Natural killer cell (primary cell): ENCODE measurements at regions of chr7 and their contacts with region 1.

Region 1: GRCh38 chr7:149422129-149422913 is 38.5 kb downstream of the ZNF777 start:
- DNase-seq: peak; percentile 72 to 92
- ATAC-seq: peak; percentile 98 to 99 (median 98)
- H3K4me3 ChIP-seq: peak overlapping the region; percentile 58
- H3K4me3 Mint-ChIP-seq: peak overlapping the region; percentile 80
- H3K27ac ChIP-seq: peak overlapping the region; percentile 70
- H3K27ac Mint-ChIP-seq: peak overlapping the region; percentile 69 to 75
- H3K4me1 ChIP-seq: peaks cover 15% of the 10 kb centered on the region
- H3K4me1 Mint-ChIP-seq: peaks cover 0 to 12% of the 10 kb centered on the region in 2 donors
- H3K27me3 ChIP-seq: no peaks in the 10 kb centered on the region
- H3K27me3 Mint-ChIP-seq: no peaks in the 10 kb centered on the region
- CTCF ChIP-seq: peak; percentile 53

Region 2: DNA sequence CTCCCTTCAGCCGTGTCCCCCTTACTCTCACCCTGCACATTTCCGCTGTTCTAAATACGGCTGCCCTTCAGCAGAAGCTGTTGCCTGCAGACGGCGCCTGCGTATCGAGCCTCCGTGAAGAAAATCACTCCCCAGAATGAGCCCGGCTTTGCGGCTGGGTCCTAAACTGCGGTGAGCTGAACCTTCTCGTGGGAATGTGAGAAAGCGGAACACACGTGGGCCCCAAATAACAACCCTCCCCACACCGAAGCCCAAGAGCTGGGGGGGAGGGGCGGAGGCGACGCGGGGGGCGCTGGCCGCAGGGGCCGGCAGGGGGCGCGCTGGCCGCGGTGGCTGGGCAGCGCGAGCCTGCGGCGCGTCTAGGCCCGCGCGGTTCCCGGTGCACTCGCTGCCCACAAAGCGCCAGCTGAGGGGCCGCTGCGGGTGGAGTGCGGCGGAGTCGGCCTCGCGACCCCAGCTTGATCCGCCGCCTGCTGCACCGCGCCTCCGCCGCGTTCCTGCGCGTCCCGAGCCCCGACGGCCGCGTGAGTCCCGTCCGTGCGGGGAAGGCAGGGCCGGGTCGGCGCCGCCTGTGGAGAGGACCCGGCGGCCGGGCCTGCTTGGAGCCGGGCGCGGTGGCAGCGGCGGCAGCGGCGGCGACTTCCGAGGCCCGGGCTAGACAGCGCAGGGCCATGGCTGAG is 275.1 kb before region 1 on chr7 and contains the start of gene ZNF398:
- intact Hi-C with region 1: loop called (anchors 2 kb)
- DNase-seq: peak; percentile 83 to 93
- ATAC-seq: peak; percentile 81 to 94 (median 84)
- H3K4me3 ChIP-seq: peak within 1 kb of the TSS; percentile 70
- H3K4me3 Mint-ChIP-seq: peak within 1 kb of the TSS; percentile 86
- H3K27ac ChIP-seq: peak within 1 kb of the TSS; percentile 67
- H3K27ac Mint-ChIP-seq: peak within 1 kb of the TSS; percentile 84 to 89
- H3K4me1 ChIP-seq: peaks cover 26% of the 10 kb centered on the region
- H3K4me1 Mint-ChIP-seq: peaks cover 18 to 25% of the 10 kb centered on the region in 2 donors
- H3K27me3 ChIP-seq: no peaks in the 10 kb centered on the region
- H3K27me3 Mint-ChIP-seq: no peaks in the 10 kb centered on the region
- CTCF ChIP-seq: peak; percentile 69
- total RNA-seq, gene ZNF398: 14.8 to 18.5 (median 18.5) TPM

Region 3: GRCh38 chr7:149460493-149461277 is 38.4 kb after region 1 on chr7 and contains the start of gene ZNF777:
- intact Hi-C with region 1: loop called (anchors 1 kb)
- DNase-seq: peak; percentile 72 to 90
- ATAC-seq: peak; percentile 97 to 98 (median 97)
- H3K4me3 ChIP-seq: peak within 1 kb of the TSS; percentile 55
- H3K4me3 Mint-ChIP-seq: peak within 1 kb of the TSS; percentile 84
- H3K27ac ChIP-seq: peak within 1 kb of the TSS; percentile 47
- H3K27ac Mint-ChIP-seq: peak within 1 kb of the TSS in 1 of 2 donors; percentile 44
- H3K4me1 ChIP-seq: peaks cover 15% of the 10 kb centered on the region
- H3K4me1 Mint-ChIP-seq: peaks cover 30 to 37% of the 10 kb centered on the region in 2 donors
- H3K27me3 ChIP-seq: peaks cover 4% of the 10 kb centered on the region
- H3K27me3 Mint-ChIP-seq: peaks cover 14 to 25% of the 10 kb centered on the region in 2 donors
- CTCF ChIP-seq: peak; percentile 56
- total RNA-seq, gene ZNF777: 14.6 to 18.2 (median 17.2) TPM

Region 4: DNA sequence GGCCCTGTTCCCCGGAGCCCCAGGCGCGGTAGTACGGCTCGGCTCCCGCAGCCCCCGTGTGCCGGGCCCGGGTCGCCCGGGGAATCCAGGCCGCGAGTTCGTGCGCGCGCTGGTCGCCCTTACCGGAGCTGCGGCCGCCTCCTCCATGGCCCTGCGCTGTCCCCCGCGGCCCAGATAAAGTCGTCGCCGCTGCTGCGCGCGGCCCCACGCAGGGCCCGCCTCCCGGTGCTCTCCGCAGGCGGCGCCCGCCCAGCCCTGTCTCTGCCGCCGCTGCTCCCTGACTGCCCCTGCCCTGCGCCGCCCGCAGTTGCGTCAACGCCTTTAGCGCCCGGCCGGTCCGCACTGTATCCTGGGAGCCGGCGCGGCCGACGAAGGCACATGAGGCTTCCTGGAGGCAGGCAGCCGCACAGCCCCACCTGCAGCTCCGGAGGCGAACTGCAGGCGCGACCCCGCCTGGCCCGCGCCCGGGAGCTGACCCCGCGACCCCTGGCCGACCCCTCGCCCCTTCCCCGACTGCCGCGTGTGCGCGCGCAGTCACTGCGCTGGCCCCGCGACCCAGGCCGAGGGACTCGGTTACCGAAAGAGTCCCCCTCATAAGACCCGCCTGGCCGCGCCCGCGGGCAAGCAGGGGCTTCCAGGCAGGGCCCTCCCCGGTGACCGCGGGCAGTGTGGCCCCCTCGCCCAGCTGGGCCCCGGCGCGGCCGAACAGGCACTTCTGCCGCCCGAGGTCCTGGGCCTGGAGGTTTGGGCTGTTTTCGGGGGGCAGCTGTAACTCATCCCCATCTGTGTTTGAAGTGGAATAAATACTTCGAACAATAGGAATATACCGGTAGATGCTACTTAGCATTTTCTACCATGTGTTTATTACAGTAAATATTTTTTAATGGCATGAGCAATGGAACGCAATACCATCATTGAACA is 202.4 kb after region 1 on chr7:
- intact Hi-C with region 1: loop called (anchors 1 kb)
- DNase-seq: peak; percentile 92 to 94
- ATAC-seq: peak; percentile 82 to 95 (median 90)
- H3K4me3 ChIP-seq: peak overlapping the region; percentile 68
- H3K4me3 Mint-ChIP-seq: peak overlapping the region; percentile 86
- H3K27ac ChIP-seq: peak overlapping the region; percentile 75
- H3K27ac Mint-ChIP-seq: peak overlapping the region; percentile 88 to 95
- H3K4me1 ChIP-seq: peaks cover 38% of the 10 kb centered on the region
- H3K4me1 Mint-ChIP-seq: peaks cover 41 to 45% of the 10 kb centered on the region in 2 donors
- H3K27me3 ChIP-seq: no peaks in the 10 kb centered on the region
- H3K27me3 Mint-ChIP-seq: peaks cover 8 to 11% of the 10 kb centered on the region in 2 donors
- CTCF ChIP-seq: peak; percentile 94